Motor neuron (in vitro differentiated cells): ENCODE measurements at regions of chr10 and their contacts with region 1.

Region 1: GRCh38 chr10:17257466-17258321 is 29.7 kb downstream of the VIM start:
- ATAC-seq: peak; percentile 30 to 96 (median 70)
- H3K4me3 ChIP-seq: no peak overlapping the region
- H3K27ac ChIP-seq: no peak overlapping the region
- H3K4me1 ChIP-seq: peaks cover 0 to 5% of the 10 kb centered on the region in 2 donors

Region 2: GRCh38 chr10:16828114-16828568 is 429.6 kb before region 1 on chr10:
- in situ Hi-C with region 1: loop called in 4 of 9 experiments (anchors 25 kb)
- ATAC-seq: peak; percentile 60 to 83 (median 67)
- H3K4me3 ChIP-seq: no peak overlapping the region
- H3K27ac ChIP-seq: no peak overlapping the region
- H3K4me1 ChIP-seq: no peaks in the 10 kb centered on the region

Region 3: GRCh38 chr10:16843252-16843870 is 414.3 kb before region 1 on chr10:
- in situ Hi-C with region 1: loop called in 8 of 9 experiments (anchors 10 to 25 kb)
- ATAC-seq: peak; percentile 25 to 85 (median 56)
- H3K4me3 ChIP-seq: no peak overlapping the region
- H3K27ac ChIP-seq: no peak overlapping the region
- H3K4me1 ChIP-seq: no peaks in the 10 kb centered on the region